Natural killer cell (primary cell): ENCODE measurements at regions of chrX and their contacts with region 1.

Region 1: DNA sequence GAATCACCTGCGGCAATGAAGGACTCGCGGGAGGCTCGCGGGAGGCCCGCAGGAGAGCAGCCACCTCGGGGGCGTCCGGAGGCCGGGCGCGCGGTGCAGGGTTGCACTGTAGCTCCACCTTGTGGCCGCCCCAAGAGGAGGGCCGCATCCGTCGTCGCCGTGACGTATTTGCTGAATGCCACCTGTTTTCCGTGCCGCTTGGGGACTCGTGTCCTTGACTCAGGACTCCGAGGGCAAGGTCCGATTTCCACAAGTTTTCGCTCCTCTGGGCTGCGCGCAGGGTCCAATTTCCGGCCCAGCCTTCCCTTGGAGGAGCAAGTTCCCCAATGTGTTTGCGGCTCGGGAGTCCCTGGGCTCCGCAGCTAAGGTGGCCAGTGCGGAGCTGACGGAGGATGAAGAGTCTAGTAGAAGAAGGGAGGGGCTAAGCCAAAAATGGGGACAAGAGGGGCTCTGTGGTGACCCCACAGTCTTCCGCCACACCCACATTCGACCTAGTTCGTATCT is 10.7 kb upstream of the DLG3 start:
- DNase-seq: peak; percentile 73 to 88
- ATAC-seq: peak; percentile 76 to 92 (median 88)
- H3K4me3 ChIP-seq: peak overlapping the region; percentile 96
- H3K4me3 Mint-ChIP-seq: peak overlapping the region; percentile 88
- H3K27ac ChIP-seq: peak overlapping the region; percentile 92
- H3K27ac Mint-ChIP-seq: peak overlapping the region; percentile 81 to 95
- H3K4me1 ChIP-seq: peaks cover 26% of the 10 kb centered on the region
- H3K4me1 Mint-ChIP-seq: peaks cover 18 to 33% of the 10 kb centered on the region in 2 donors
- H3K27me3 ChIP-seq: no peaks in the 10 kb centered on the region
- H3K27me3 Mint-ChIP-seq: no peaks in the 10 kb centered on the region
- CTCF ChIP-seq: peak; percentile 60

Region 2: GRCh38 chrX:70133303-70134115 is 300.4 kb before region 1 on chrX and contains the start of gene IGBP1:
- intact Hi-C with region 1: loop called (anchors 5 kb)
- DNase-seq: peak; percentile 57 to 91
- ATAC-seq: peak; percentile 84 to 94 (median 87)
- H3K4me3 ChIP-seq: peak within 1 kb of the TSS; percentile 81
- H3K4me3 Mint-ChIP-seq: peak within 1 kb of the TSS; percentile 97
- H3K27ac ChIP-seq: peak within 1 kb of the TSS; percentile 92
- H3K27ac Mint-ChIP-seq: peak within 1 kb of the TSS; percentile 93 to 97
- H3K4me1 ChIP-seq: peaks cover 11% of the 10 kb centered on the region
- H3K4me1 Mint-ChIP-seq: peaks cover 18 to 32% of the 10 kb centered on the region in 2 donors
- H3K27me3 ChIP-seq: no peaks in the 10 kb centered on the region
- H3K27me3 Mint-ChIP-seq: peaks cover 0 to 7% of the 10 kb centered on the region in 2 donors
- CTCF ChIP-seq: peak; percentile 48
- total RNA-seq, gene IGBP1: 39.4 to 40.7 (median 40.1) TPM

Region 3: DNA sequence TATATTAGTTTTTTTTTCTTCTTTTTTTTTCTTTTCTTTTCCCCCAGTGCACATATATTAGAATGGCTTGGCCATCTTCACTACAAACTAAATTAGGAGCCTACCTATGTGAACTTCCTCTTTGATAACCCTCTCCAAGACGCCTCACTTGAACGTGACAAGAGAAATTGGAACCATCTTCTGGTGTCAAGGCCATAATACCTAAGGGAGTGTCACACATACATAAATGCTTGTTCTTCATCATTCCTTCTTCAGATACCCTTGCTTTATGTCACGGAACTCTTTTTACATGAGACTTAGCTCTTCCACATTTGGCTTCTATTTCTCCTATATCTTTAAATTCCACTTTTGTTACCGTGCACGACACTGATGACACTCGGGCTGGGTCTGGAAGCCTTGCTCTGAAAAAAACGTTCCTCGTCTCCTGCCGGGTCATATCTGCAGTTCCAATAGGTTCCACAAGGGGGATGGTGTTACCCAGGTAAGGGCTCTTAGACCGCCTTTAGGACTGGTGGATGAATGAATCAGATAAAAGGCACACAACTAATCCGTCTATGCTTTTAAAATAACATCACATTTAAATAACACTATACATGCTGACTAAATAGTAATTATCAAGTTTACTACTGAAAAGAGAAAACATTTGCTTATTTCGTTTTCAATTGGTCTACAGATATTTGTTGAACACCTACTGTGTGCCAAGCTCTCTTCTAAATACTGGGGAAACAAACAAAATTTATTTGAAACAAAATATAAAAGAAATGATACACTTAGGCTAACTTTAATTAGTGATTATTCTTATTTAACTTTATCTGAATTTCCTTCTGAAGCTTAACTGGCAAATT is 236.7 kb before region 1 on chrX:
- intact Hi-C with region 1: loop called (anchors 2 kb)
- DNase-seq: peak; percentile 21 to 80
- ATAC-seq: peak; percentile 66 to 86 (median 83)
- H3K4me3 ChIP-seq: no peak overlapping the region
- H3K4me3 Mint-ChIP-seq: no peak overlapping the region
- H3K27ac ChIP-seq: no peak overlapping the region
- H3K27ac Mint-ChIP-seq: no peak overlapping the region
- H3K4me1 ChIP-seq: no peaks in the 10 kb centered on the region
- H3K4me1 Mint-ChIP-seq: peaks cover 0 to 5% of the 10 kb centered on the region in 2 donors
- H3K27me3 ChIP-seq: no peaks in the 10 kb centered on the region
- H3K27me3 Mint-ChIP-seq: peaks cover 10 to 28% of the 10 kb centered on the region in 2 donors
- CTCF ChIP-seq: peak; percentile 54

Region 4: GRCh38 chrX:70289793-70290776 is 143.8 kb before region 1 on chrX and contains the starts of genes KIF4A and PDZD11:
- intact Hi-C with region 1: loop called (anchors 2 kb)
- DNase-seq: peak; percentile 73 to 84
- ATAC-seq: peak; percentile 99 to 100 (median 99)
- H3K4me3 ChIP-seq: peak within 1 kb of the TSS; percentile 70
- H3K4me3 Mint-ChIP-seq: peak within 1 kb of the TSS; percentile 86
- H3K27ac ChIP-seq: peak within 1 kb of the TSS; percentile 76
- H3K27ac Mint-ChIP-seq: peak within 1 kb of the TSS; percentile 72 to 86
- H3K4me1 ChIP-seq: peaks cover 18% of the 10 kb centered on the region
- H3K4me1 Mint-ChIP-seq: peaks cover 0 to 6% of the 10 kb centered on the region in 2 donors
- H3K27me3 ChIP-seq: no peaks in the 10 kb centered on the region
- H3K27me3 Mint-ChIP-seq: no peaks in the 10 kb centered on the region
- CTCF ChIP-seq: no peak
- total RNA-seq, gene KIF4A: 0.53 to 1.3 (median 0.79) TPM
- total RNA-seq, gene PDZD11: 16.7 to 22.3 (median 17.0) TPM

Region 5: DNA sequence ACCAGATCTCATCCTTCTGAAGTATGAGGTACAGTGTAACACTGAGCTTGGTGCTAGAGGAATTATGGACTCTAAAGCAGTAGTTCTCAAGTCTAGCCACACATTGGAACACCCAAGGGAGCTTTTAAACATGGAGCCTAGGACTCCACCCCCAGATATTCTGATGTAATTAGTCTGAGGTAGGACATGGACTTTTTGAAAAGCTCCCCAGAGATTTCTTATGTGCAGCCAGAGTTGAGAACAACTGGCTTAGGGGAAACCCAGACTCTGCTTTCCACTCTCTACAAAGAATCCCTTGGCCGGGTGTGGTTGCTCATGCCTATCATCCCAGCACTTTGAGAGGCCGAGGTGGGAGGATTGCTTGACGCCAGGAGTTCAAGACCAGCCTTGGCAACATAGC is 22.4 kb before region 1 on chrX:
- intact Hi-C with region 1: no loop called
- DNase-seq: no peak
- ATAC-seq: no peak
- H3K4me3 ChIP-seq: no peak overlapping the region
- H3K4me3 Mint-ChIP-seq: no peak overlapping the region
- H3K27ac ChIP-seq: no peak overlapping the region
- H3K27ac Mint-ChIP-seq: no peak overlapping the region
- H3K4me1 ChIP-seq: no peaks in the 10 kb centered on the region
- H3K4me1 Mint-ChIP-seq: no peaks in the 10 kb centered on the region
- H3K27me3 ChIP-seq: no peaks in the 10 kb centered on the region
- H3K27me3 Mint-ChIP-seq: no peaks in the 10 kb centered on the region
- CTCF ChIP-seq: no peak